ENCODE measurements at regions of chr13 and their contacts with region 1.

Region 1: GRCh38 chr13:81275666-81276258 is 934.8 kb upstream of the SPRY2 start:
- DNase-seq: peak; percentile 1
- ATAC-seq: no peak
- H3K4me3 Mint-ChIP-seq: no peak overlapping the region
- H3K27ac Mint-ChIP-seq: no peak overlapping the region
- H3K4me1 Mint-ChIP-seq: no peaks in the 10 kb centered on the region
- H3K27me3 Mint-ChIP-seq: no peaks in the 10 kb centered on the region
- CTCF ChIP-seq: no peak

Region 2: DNA sequence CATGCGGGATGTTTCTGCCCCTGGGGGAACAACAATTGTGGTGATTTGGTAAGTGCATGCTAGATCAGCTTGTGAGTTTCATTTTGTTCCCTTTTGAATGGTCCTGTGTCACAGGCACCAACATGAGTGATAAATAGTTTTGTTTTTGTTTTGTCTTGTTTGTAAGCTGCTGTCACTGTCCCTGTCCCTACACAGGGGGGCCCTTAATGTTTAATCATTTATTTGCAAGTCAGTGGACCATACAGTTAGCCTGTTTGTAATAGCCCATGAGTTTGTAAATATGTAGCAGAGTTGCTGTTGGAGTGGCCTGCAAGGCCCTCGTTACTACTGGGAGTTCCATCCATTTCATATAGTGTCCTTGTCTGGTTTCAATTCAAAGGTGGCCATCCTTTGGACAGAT is 44.8 kb after region 1 on chr13:
- CTCF ChIA-PET with region 1: no interaction called
- POLR2A ChIA-PET with region 1: no interaction called
- intact Hi-C with region 1: loop called (anchors 5 kb)
- DNase-seq: no peak
- ATAC-seq: no peak
- H3K4me3 Mint-ChIP-seq: no peak overlapping the region
- H3K27ac Mint-ChIP-seq: no peak overlapping the region
- H3K4me1 Mint-ChIP-seq: no peaks in the 10 kb centered on the region
- H3K27me3 Mint-ChIP-seq: no peaks in the 10 kb centered on the region
- CTCF ChIP-seq: no peak

Region 3: GRCh38 chr13:81726037-81726726 is 450.4 kb after region 1 on chr13:
- CTCF ChIA-PET with region 1: no interaction called
- POLR2A ChIA-PET with region 1: no interaction called
- intact Hi-C with region 1: no loop called
- DNase-seq: no peak
- ATAC-seq: no peak
- H3K4me3 Mint-ChIP-seq: no peak overlapping the region
- H3K27ac Mint-ChIP-seq: no peak overlapping the region
- H3K4me1 Mint-ChIP-seq: no peaks in the 10 kb centered on the region
- H3K27me3 Mint-ChIP-seq: no peaks in the 10 kb centered on the region
- CTCF ChIP-seq: no peak